PC-9 (cell line): ENCODE measurements at regions of chr7 and their contacts with region 1.

Region 1: DNA sequence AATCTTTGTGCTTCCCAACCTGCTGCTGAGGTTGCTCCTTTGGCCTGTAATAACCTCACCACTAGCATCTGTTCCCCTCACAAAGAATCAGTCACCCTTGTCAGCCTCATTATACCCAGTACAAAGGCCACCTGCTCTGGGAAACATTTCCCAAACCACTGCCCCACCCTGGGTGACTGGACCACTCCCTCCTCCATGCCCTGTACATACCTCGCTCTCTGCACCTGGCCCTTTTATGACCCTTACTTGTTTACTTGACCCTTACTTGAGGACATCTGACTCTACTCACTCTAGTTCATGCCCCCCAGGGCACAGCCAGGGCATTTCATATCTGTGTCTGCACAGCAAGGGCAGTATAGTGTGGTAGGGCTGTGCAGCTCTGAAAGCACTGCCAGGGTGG is 21.4 kb upstream of the AOC1 start:
- DNase-seq: peak; percentile 62 to 68
- H3K4me3 ChIP-seq: no peak overlapping the region
- H3K27ac ChIP-seq: no peak overlapping the region
- H3K4me1 ChIP-seq: no peaks in the 10 kb centered on the region
- H3K27me3 ChIP-seq: peaks cover 37% of the 10 kb centered on the region
- CTCF ChIP-seq: no peak

Region 2: GRCh38 chr7:150903606-150904005 is 72.7 kb after region 1 on chr7:
- CTCF ChIA-PET with region 1: no interaction called
- POLR2A ChIA-PET with region 1: interaction called, 14 read pairs
- intact Hi-C with region 1: loop called (anchors 2 kb)
- DNase-seq: peak; percentile 64 to 93
- H3K4me3 ChIP-seq: no peak overlapping the region
- H3K27ac ChIP-seq: no peak overlapping the region
- H3K4me1 ChIP-seq: no peaks in the 10 kb centered on the region
- H3K27me3 ChIP-seq: peaks cover 52% of the 10 kb centered on the region
- CTCF ChIP-seq: no peak

Region 3: DNA sequence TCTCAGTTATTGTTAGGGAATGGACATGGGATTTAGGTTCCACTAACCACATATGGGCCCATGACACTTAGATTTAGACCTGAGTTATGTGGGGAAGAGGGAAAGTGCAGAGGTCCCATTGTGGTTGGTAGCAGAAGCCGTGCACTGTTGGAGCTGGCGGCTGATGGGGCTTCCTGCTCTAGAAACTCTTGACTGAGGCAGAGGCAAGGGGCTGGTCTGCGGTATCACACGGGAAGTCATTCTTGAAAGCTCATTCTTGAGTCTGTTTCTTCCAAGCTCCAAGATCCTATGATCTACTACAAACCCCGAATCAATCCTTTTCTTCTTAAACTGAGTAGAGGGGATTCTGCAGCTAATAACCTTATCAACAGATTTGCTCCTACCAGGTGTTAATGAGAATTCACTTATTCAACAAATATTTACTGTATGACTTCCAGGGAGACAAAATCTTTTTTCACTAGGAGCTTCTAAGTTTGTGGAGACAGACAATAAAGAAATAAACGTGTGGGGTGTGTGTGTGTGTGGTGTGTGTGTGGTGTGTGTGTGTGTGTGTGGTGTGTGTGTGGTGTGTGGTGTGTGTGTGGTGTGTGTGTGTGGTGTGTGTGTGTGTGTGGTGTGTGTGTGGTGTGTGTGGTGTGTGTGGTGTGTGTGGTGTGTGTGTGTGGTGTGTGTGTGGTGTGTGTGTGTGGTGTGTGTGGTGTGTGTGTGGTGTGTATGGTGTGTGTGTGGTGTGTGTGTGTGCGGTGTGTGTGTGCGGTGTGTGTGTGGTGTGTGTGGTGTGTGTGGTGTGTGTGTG is 78.5 kb after region 1 on chr7:
- CTCF ChIA-PET with region 1: no interaction called
- POLR2A ChIA-PET with region 1: interaction called, 14 read pairs
- intact Hi-C with region 1: no loop called
- DNase-seq: no peak
- H3K4me3 ChIP-seq: no peak overlapping the region
- H3K27ac ChIP-seq: no peak overlapping the region
- H3K4me1 ChIP-seq: no peaks in the 10 kb centered on the region
- H3K27me3 ChIP-seq: peaks cover 76% of the 10 kb centered on the region
- CTCF ChIP-seq: no peak